ENCODE measurements at regions of chr2 and their contacts with region 1.

Region 1: DNA sequence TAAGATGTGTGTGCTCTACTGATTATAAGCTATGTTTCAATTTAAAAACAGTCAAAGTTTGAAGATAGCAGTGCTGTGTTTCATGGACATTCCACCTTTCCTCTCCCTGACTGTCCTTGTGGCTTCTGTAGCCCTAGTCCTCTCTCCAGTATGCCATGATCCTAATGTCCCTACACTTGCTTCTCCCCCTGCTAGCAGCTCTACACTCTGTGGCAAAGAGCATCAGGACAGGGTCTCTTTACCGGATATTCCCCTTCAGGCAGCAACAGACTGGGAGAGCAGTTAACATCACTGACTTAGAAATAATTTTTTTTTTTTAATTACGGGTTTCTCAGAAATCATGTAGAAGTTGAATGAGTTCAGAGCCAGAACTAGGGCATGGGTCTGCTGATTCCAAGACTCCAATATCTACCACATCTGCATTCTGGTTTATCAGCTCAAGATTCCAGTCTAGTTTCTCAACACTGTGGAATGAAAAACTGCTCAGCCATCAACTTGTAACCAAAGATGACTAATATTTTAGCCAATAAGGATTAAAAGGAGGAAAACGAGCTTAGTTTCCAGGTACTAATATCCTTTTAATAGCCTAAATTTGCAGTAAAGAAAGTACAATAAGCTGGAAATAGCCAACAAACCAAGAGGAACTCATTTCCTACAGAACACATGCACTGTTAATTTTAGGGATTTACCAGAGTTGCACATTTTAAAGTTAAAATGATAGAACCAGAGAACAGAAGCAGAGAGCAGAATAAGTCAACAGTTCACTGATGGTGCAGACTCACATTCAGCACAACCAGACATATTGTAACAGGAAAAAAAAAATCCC is 45.2 kb downstream of the TMEM131 start:
- DNase-seq: peak; percentile 35 to 88
- H3K4me3 ChIP-seq: no peak overlapping the region; the same call in 1 of the 2 replicates
- H3K27ac ChIP-seq: peak overlapping the region; percentile 56
- H3K4me1 ChIP-seq: peaks cover 30% of the 10 kb centered on the region
- H3K27me3 ChIP-seq: no peaks in the 10 kb centered on the region
- CTCF ChIP-seq: no peak

Region 2: DNA sequence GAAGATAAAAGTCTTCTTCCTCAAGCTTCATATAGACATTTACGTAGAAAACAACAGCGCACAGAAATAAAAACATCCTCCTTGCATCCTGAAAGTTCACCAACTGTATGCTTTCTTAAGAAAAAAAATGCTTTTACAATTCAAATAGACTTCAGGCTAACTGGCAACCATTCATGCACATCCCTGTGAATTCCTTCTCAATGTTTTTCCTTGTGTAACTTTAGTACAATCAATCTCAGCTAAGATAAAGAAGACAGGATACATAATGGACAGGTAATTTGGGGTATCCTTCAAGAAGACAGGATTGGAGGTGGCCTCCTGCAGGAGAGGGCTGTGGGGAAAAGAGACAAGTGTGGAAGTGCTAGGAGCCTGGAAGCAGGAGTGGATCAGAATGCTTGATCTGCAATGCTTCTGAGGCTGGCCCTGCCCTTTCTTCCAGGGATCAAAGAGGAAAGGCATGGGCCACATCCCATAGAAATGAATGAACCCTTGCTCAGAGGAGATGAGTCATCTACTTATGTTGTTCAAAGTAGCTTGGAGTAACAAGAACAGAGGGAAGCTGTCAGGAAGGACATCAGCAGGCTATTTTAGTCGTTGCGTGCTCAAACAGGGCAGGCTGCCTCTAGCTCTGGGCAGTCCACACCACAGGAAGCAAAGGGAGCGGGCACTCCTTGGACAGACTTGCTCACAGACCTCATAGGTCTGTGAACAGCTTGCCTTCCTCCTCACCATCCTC is 81.4 kb before region 1 on chr2:
- CTCF ChIA-PET with region 1: no interaction called
- POLR2A ChIA-PET with region 1: interaction called, 9 read pairs
- intact Hi-C with region 1: loop called (anchors 5 kb)
- DNase-seq: peak; percentile 71 to 97
- H3K4me3 ChIP-seq: peak overlapping the region; percentile 19; the same call in 1 of the 2 replicates
- H3K27ac ChIP-seq: peak overlapping the region; percentile 88
- H3K4me1 ChIP-seq: peaks cover 52% of the 10 kb centered on the region
- H3K27me3 ChIP-seq: no peaks in the 10 kb centered on the region
- CTCF ChIP-seq: no peak

Region 3: GRCh38 chr2:97935719-97936161 is 14.8 kb before region 1 on chr2:
- CTCF ChIA-PET with region 1: interaction called, 4 read pairs
- POLR2A ChIA-PET with region 1: no interaction called
- intact Hi-C with region 1: loop called (anchors 2 kb)
- DNase-seq: peak; percentile 54 to 80
- H3K4me3 ChIP-seq: peak overlapping the region; percentile 37; the same call in 1 of the 2 replicates
- H3K27ac ChIP-seq: peak overlapping the region; percentile 34
- H3K4me1 ChIP-seq: peaks cover 31% of the 10 kb centered on the region
- H3K27me3 ChIP-seq: no peaks in the 10 kb centered on the region
- CTCF ChIP-seq: no peak

Measured in PC-9 (cell line).